Activated CD8-positive, alpha-beta T cell treated with anti-CD3 and anti-CD28 coated beads, Interleukin-2, amount 10 ng/mL, durations not matched to agents 7 days and 5 days (primary cell): ENCODE measurements at regions of chr11 and their contacts with region 1.

Region 1: DNA sequence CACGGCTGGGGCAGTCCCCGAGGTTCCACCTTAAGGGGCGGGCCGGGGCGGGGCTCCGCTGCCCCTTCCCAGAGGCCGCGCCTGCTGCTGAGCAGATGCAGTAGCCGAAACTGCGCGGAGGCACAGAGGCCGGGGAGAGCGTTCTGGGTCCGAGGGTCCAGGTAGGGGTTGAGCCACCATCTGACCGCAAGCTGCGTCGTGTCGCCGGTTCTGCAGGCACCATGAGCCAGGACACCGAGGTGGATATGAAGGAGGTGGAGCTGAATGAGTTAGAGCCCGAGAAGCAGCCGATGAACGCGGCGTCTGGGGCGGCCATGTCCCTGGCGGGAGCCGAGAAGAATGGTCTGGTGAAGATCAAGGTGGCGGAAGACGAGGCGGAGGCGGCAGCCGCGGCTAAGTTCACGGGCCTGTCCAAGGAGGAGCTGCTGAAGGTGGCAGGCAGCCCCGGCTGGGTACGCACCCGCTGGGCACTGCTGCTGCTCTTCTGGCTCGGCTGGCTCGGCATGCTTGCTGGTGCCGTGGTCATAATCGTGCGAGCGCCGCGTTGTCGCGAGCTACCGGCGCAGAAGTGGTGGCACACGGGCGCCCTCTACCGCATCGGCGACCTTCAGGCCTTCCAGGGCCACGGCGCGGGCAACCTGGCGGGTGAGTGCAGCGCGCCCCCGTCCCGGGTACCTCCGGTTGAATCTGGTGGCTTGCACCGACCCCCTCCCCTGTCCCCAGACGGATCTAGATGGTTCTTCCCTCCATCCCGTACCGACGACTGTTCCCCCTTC is at the start of gene SLC3A2:
- DNase-seq: peak; percentile 92
- ATAC-seq: peak; percentile 87
- H3K4me3 Mint-ChIP-seq: peak within 1 kb of the TSS; percentile 100
- H3K27ac Mint-ChIP-seq: peak within 1 kb of the TSS; percentile 100
- H3K4me1 Mint-ChIP-seq: peaks cover 49% of the 10 kb centered on the region
- H3K27me3 Mint-ChIP-seq: no peaks in the 10 kb centered on the region
- total RNA-seq, gene SLC3A2: 190 to 202 TPM

Region 2: DNA sequence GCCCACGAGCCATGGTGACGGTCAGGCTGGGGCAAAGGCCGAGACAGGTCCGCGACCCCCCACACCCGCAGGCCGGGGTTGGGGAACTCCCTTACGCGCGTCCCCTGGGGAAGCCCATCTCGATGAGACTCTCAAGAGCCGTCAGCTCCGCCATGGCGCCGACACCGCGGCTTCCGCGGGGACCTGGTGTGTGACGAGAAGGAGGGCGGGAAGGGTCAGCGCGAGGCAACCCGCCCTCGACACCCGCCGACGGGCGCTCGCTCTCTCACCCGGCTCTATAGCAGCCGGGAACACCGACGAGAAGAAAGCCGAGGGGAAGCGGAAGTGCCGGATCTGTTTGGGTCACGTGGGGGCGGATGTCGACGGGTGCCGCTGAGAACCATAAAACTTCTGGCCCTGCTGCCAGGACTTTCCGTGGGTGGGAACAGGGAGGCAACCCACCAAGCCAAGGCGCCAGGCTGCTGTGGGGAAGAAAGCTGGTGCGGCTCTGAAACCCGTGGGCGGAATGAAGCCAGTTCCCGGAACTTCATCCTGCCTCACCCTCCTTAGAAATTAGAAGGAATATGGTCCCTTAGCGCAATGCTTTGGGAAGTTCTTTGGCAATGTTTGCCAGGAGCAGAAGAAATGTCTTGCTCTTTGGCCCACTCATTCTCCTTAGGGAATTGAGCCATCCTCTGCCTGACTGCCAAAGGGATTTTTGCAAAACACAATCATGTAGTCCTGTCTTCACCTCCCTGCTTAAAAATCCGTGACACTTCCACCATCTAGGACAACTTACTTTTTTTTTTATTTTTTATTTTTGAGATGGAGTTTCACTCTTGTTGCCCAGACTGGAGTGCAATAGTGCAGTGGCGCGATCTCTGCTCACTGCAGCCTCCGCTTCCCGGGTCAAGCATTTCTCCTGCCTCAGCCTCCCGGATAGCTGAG is 202.0 kb before region 1 on chr11 and contains the start of gene UBXN1:
- CTCF ChIA-PET with region 1: interaction called, 12 read pairs
- POLR2A ChIA-PET with region 1: interaction called, 3 read pairs
- DNase-seq: peak; percentile 89
- ATAC-seq: peak; percentile 88
- H3K4me3 Mint-ChIP-seq: peak within 1 kb of the TSS; percentile 92
- H3K27ac Mint-ChIP-seq: peak within 1 kb of the TSS; percentile 87
- H3K4me1 Mint-ChIP-seq: peaks cover 42% of the 10 kb centered on the region
- H3K27me3 Mint-ChIP-seq: no peaks in the 10 kb centered on the region
- total RNA-seq, gene UBXN1: 107 to 118 TPM

Region 3: DNA sequence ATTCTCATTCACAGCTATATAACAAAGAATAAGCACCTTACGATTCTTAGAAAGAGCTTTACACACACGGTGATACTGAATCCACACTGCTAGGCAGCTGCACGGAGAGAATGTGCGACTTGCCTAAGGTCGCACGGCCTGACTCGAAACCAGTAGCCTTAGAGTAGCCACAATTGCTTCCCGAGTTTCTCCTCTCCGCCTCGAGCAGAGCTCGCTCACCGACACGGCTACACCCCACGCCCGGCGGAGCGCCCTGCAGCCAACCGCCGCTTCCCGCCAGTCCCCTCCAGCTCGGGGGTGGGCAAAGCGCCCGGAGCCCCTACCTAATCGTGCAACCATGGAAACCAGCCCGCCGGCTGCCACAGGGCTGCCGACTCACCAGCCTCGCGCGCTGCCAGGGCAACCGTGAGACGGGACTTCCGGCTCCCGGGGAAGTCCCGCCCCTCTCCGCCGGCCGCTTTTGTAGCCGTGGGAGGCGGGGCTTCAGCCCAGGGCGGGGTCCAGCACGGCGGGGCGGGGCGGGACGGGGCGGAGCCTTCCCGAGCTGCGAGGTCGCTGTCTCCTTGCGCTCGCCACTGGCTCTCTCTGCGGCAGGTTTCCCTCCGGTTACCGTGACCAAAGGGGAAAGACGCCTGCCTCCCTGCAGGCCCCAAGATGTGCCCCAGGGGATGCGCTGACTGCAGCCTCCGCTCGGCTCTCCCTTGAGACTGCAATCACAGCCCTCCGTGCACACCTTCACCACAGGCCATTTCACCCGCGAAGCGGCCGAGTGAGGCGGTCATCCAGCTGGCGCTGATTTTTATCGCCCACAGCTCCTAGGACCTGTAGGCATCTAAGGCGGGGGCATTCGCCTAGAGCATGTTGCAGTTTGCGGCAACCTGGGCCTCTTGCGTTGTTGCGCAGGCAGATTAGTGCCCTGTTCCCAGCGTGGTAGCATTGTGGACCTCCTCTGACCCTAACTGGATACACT is 174.8 kb before region 1 on chr11:
- CTCF ChIA-PET with region 1: interaction called, 4 read pairs
- POLR2A ChIA-PET with region 1: interaction called, 10 read pairs
- DNase-seq: peak; percentile 95
- ATAC-seq: peak; percentile 67
- H3K4me3 Mint-ChIP-seq: peak overlapping the region; percentile 90
- H3K27ac Mint-ChIP-seq: peak overlapping the region; percentile 83
- H3K4me1 Mint-ChIP-seq: peaks cover 49% of the 10 kb centered on the region
- H3K27me3 Mint-ChIP-seq: no peaks in the 10 kb centered on the region

Region 4: DNA sequence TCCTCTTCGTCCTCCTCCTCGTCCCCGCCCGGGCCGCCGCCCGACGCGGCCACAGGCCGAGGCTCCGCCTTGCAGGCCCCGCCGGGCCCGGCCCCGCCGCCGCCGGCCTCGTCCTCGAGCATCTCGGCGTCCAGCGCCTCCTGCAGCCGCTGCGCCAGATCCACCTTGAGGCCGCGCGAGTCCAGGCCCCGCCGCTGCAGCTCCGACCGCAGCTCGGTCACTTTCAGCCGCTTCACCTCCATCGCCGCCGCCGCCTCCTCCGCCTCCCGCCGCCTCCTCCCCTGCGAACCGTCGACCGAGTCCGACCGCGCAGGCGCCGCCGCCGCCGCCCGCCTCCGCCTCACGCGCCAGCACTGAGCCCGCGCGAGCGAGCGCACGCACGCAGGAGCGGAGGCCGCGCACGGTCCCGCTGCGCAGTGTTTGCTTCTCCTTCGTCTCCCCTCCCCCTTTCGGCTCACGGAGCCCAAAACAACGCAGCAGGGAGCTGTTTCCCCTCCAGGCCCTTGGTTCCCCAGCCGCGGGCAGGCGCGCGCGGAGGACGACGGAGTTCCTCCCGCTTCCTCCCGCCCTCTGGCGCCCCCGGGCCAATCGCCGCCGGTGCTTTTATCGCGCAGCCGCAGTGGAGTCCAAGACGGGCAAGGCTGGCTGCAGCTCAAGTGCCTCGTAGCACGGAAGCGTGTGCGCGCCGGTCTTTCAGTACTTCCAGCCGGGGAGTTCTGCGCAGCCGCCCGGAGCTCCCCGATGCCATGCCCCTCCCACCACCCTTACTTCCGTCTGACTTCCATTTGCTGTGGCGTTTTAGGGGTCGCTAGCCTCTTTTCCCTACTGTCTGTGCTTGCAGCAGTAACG is 153.9 kb before region 1 on chr11 and contains the start of gene HNRNPUL2:
- CTCF ChIA-PET with region 1: interaction called, 8 read pairs
- POLR2A ChIA-PET with region 1: interaction called, 23 read pairs
- DNase-seq: peak; percentile 99
- ATAC-seq: peak; percentile 87
- H3K4me3 Mint-ChIP-seq: peak within 1 kb of the TSS; percentile 94
- H3K27ac Mint-ChIP-seq: peak within 1 kb of the TSS; percentile 96
- H3K4me1 Mint-ChIP-seq: peaks cover 47% of the 10 kb centered on the region
- H3K27me3 Mint-ChIP-seq: no peaks in the 10 kb centered on the region
- total RNA-seq, gene HNRNPUL2: 65.4 to 67.0 TPM

Region 5: DNA sequence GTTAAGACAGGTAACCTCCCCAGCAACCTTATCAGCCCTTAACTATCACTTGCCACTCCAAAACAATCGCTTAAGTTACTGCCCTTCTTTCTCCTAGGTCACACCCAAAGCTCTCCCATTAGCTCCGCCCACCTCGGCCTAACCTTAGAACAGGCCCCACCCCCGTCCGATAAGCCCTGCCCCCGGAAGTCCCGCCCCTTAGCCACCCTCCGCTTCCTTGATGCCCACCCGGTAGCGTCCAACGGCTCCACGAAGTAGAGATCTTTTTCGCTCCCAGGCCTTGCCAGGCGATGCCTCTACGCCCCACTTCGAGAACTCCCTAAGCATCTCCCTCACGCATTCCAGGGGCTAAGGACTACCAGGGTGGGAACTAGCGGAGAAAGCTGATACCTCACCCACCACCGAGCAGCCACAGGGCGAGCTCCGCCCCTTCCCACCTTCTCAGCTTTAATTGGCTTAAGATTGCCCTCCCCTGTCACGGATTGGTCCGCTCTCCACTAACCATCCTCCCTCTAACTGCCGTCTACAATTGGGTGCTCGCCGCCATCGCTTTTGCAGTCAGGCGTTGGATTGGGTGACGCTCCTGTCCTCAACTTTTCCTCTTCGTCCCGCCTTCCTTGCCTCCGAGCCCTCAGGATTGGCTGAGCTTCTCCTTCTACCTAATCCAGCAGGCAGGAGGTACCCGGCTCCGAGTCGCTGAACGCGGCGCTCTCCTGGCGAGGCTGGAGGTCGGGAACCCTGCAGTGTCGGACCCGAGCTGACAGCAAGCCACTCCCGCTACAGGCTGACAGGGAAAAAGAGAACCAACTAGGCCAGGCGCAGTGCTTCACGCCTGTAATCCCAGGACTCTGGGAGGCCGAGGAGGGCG is 127.0 kb before region 1 on chr11 and contains the start of gene ZBTB3:
- CTCF ChIA-PET with region 1: no interaction called
- POLR2A ChIA-PET with region 1: interaction called, 19 read pairs
- DNase-seq: peak; percentile 99
- ATAC-seq: peak; percentile 99
- H3K4me3 Mint-ChIP-seq: peak within 1 kb of the TSS; percentile 94
- H3K27ac Mint-ChIP-seq: peak within 1 kb of the TSS; percentile 97
- H3K4me1 Mint-ChIP-seq: peaks cover 31% of the 10 kb centered on the region
- H3K27me3 Mint-ChIP-seq: no peaks in the 10 kb centered on the region
- total RNA-seq, gene ZBTB3: 12.4 to 12.8 TPM

Region 6: DNA sequence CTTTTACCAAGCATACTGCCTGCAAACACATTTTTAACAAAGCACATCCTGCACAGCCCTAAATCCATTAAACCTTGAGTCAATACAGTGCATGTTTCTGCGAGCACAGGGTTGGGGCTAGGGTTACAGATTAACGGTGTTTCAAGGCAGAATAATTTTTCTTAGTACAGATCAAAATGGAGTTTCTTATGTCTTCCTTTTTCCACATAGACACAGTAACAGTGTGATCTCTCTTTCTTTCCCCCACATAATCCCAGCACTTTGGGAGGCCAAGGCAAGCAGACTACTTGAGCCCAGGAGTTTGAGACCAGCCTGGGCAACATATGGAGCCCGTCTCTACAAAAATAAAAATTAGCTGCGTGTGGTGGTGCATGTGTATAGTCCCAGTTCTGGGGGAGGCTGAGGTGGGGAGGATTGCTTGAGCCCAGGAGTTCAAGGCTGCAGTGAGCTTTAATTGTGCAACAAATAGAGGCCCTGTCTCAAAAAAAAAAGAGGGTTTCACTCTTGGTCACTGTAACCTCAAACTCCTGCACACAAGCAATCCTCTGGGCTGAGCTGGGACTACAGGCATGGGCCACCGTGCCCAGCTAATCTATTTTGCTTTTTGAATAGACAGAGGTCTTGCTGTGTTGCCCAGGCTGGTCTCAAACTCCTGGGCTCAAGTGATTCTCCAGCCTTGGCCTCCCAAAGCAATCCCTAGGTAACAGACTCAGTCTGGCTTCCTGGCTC is 20.0 kb before region 1 on chr11:
- CTCF ChIA-PET with region 1: interaction called, 20 read pairs
- POLR2A ChIA-PET with region 1: interaction called, 104 read pairs
- DNase-seq: no peak
- ATAC-seq: no peak
- H3K4me3 Mint-ChIP-seq: no peak overlapping the region
- H3K27ac Mint-ChIP-seq: peak overlapping the region; percentile 67
- H3K4me1 Mint-ChIP-seq: peaks cover 63% of the 10 kb centered on the region
- H3K27me3 Mint-ChIP-seq: no peaks in the 10 kb centered on the region

Region 7: GRCh38 chr11:62905927-62906531 is 25.0 kb after region 1 on chr11:
- CTCF ChIA-PET with region 1: interaction called, 16 read pairs
- POLR2A ChIA-PET with region 1: no interaction called
- DNase-seq: peak; percentile 86
- ATAC-seq: peak; percentile 83
- H3K4me3 Mint-ChIP-seq: no peak overlapping the region
- H3K27ac Mint-ChIP-seq: no peak overlapping the region
- H3K4me1 Mint-ChIP-seq: peaks cover 18% of the 10 kb centered on the region
- H3K27me3 Mint-ChIP-seq: peaks cover 27% of the 10 kb centered on the region